Activated B cell treated with CpG ODN at 0.5 μM for 24 hours (primary cell): ENCODE measurements at regions of chr17 and their contacts with region 1.

Region 1: GRCh38 chr17:35486920-35487732 is 38.6 kb upstream of the SLFN13 start:
- DNase-seq: peak; percentile 47
- ATAC-seq: peak; percentile 49
- H3K4me3 Mint-ChIP-seq: peak overlapping the region; percentile 94
- H3K27ac Mint-ChIP-seq: peak overlapping the region; percentile 76
- H3K4me1 Mint-ChIP-seq: peaks cover 28% of the 10 kb centered on the region
- H3K27me3 Mint-ChIP-seq: peaks cover 40% of the 10 kb centered on the region
- CTCF ChIP-seq: no peak

Region 2: GRCh38 chr17:35345926-35346771 is 141.0 kb before region 1 on chr17:
- CTCF ChIA-PET with region 1: interaction called, 3 read pairs
- POLR2A ChIA-PET with region 1: no interaction called
- intact Hi-C with region 1: loop called (anchors 1 kb)
- DNase-seq: no peak
- ATAC-seq: peak; percentile 74
- H3K4me3 Mint-ChIP-seq: peak overlapping the region; percentile 86
- H3K27ac Mint-ChIP-seq: peak overlapping the region; percentile 79
- H3K4me1 Mint-ChIP-seq: peaks cover 40% of the 10 kb centered on the region
- H3K27me3 Mint-ChIP-seq: no peaks in the 10 kb centered on the region
- CTCF ChIP-seq: no peak

Region 3: DNA sequence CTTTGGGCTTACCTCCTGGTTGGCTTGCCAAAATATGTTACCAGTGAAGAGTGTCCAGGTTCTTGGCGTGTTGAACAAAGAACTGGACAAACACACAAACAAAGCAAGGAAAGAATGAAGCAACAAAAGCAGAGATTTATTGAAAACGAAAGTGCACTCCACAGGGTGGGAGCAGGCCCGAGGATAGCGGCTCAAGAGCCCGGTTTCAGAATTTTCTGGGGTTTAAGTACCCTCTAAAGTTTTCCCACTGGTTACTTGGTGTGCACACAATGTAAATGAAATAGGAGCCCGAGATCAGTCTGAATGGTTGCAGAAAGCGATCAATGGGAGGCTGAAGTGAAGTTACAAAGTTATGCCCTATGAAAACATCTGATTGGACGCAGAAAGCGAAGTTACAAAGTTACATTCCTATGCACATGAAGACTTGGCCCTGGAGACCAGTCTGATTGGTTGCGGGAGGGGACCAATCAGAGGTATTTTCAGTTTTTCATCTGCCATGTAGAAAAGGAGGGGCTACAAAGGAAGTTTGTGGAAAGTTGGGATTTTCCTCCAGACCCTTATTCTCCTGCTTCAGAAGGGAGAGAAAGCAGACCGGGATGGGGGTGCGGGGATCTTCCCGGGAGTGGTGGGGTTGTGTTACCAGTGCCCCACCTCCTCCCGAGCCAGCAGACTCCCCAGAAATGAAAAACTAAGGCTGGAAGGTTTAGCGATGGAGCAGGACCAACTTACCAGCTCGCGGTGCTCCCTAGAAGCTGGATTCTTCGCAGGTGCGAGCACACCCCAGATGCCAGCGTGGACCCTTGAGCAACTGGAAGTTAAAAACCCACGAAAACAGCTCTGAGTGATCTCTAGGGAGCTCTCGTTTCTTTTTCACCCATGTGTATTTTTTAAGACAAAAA is 54.7 kb before region 1 on chr17 and contains the start of gene SLFN12:
- CTCF ChIA-PET with region 1: no interaction called
- POLR2A ChIA-PET with region 1: no interaction called
- intact Hi-C with region 1: loop called (anchors 1 kb)
- DNase-seq: peak; percentile 29
- ATAC-seq: peak; percentile 93
- H3K4me3 Mint-ChIP-seq: peak within 1 kb of the TSS; percentile 97
- H3K27ac Mint-ChIP-seq: peak within 1 kb of the TSS; percentile 92
- H3K4me1 Mint-ChIP-seq: peaks cover 31% of the 10 kb centered on the region
- H3K27me3 Mint-ChIP-seq: no peaks in the 10 kb centered on the region
- CTCF ChIP-seq: no peak
- total RNA-seq, gene SLFN12: 8.7 and 9.0 TPM in 2 replicates

Region 4: GRCh38 chr17:35460354-35460851 is 26.7 kb before region 1 on chr17:
- CTCF ChIA-PET with region 1: no interaction called
- POLR2A ChIA-PET with region 1: interaction called, 4 read pairs
- intact Hi-C with region 1: loop called (anchors 1 kb)
- DNase-seq: peak; percentile 62
- ATAC-seq: peak; percentile 94
- H3K4me3 Mint-ChIP-seq: peak overlapping the region; percentile 80
- H3K27ac Mint-ChIP-seq: peak overlapping the region; percentile 67
- H3K4me1 Mint-ChIP-seq: peaks cover 19% of the 10 kb centered on the region
- H3K27me3 Mint-ChIP-seq: peaks cover 3% of the 10 kb centered on the region
- CTCF ChIP-seq: no peak

Region 5: DNA sequence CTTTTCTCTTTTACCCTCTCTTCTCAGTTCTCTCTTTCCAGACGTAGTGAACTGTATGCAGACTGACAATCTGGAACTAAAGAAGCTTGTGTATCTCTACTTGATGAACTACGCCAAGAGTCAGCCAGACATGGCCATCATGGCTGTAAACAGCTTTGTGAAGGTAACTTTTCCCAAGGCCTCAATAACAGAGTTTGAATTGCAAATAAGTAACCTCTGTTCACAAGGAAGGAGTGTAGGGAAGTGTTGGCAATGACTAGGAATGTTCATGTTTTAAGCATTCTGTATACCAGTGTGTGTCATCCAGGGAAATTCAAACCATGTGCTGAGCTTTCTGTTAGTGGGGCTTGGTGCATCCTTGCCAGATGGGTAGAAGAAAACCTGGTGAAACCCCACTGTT is 118.6 kb after region 1 on chr17:
- CTCF ChIA-PET with region 1: no interaction called
- POLR2A ChIA-PET with region 1: no interaction called
- intact Hi-C with region 1: no loop called
- DNase-seq: no peak
- ATAC-seq: no peak
- H3K4me3 Mint-ChIP-seq: no peak overlapping the region
- H3K27ac Mint-ChIP-seq: no peak overlapping the region
- H3K4me1 Mint-ChIP-seq: no peaks in the 10 kb centered on the region
- H3K27me3 Mint-ChIP-seq: no peaks in the 10 kb centered on the region
- CTCF ChIP-seq: no peak

Region 6: GRCh38 chr17:36937966-36938565 is 1450.9 kb after region 1 on chr17:
- CTCF ChIA-PET with region 1: no interaction called
- POLR2A ChIA-PET with region 1: no interaction called
- intact Hi-C with region 1: loop called (anchors 5 kb)
- DNase-seq: peak; percentile 30
- ATAC-seq: no peak
- H3K4me3 Mint-ChIP-seq: peak overlapping the region; percentile 76
- H3K27ac Mint-ChIP-seq: peak overlapping the region; percentile 24
- H3K4me1 Mint-ChIP-seq: peaks cover 58% of the 10 kb centered on the region
- H3K27me3 Mint-ChIP-seq: peaks cover 68% of the 10 kb centered on the region
- CTCF ChIP-seq: no peak